ENCODE measurements at regions of chr10 and their contacts with region 1.

Region 1: DNA sequence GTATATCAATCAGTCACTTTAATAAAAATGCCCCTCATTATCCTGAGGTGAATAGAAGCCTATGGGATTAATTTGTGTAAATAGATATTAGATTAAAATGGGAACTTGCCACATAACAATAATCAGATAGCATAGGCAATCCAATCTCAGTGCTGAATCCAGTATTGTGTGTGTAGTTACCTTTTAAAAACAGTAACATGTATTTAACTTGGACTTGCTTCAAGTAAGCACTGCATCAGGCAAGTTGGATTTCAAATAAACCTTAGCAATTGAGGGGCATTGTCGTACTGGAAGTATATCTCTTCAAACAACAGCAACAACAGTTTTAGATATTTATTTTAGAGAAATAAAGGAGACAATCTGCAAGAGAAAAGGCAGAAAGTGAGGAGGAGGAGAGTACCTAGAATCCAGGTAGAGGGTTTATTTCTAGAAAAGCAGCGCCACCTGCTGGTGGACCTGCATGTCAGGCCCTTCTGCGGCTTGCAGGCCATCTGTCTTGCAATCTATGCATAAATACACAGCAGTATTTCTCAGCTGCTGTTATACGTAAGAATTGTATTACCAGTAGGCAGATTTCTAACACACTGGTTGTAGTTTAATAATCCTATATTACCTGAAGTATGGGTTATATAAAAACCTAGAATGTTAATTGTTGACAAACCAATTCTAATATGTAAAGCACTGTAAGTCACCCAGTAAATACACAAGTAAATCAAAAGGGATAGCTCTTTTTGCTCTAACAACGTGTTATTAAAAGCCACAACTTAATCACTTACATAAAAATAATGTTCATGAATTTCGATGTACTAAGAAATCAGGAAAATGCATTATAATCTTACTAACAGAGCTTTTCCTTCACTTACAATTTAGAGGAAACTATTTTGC is 652.8 kb downstream of the KCNMA1 start:
- DNase-seq: peak; percentile 71 to 86
- ATAC-seq: peak; percentile 80
- H3K4me3 ChIP-seq: no peak overlapping the region
- H3K27ac ChIP-seq: no peak overlapping the region
- H3K4me1 ChIP-seq: no peaks in the 10 kb centered on the region
- H3K27me3 ChIP-seq: no peaks in the 10 kb centered on the region

Region 2: GRCh38 chr10:76558586-76558985 is 426.2 kb before region 1 on chr10:
- intact Hi-C with region 1: loop called in 1 of 2 experiments (anchors 5 kb)
- DNase-seq: no peak
- ATAC-seq: no peak
- H3K4me3 ChIP-seq: no peak overlapping the region
- H3K27ac ChIP-seq: peak overlapping the region in 1 of 2 donors; percentile 68
- H3K4me1 ChIP-seq: peaks cover 0 to 7% of the 10 kb centered on the region in 2 donors
- H3K27me3 ChIP-seq: no peaks in the 10 kb centered on the region

Region 3: GRCh38 chr10:76675951-76676587 is 308.7 kb before region 1 on chr10:
- intact Hi-C with region 1: loop called in 1 of 2 experiments (anchors 10 kb)
- DNase-seq: peak; percentile 88 to 92
- ATAC-seq: peak; percentile 94
- H3K4me3 ChIP-seq: no peak overlapping the region
- H3K27ac ChIP-seq: peak overlapping the region; percentile 68 to 100
- H3K4me1 ChIP-seq: peaks cover 4 to 6% of the 10 kb centered on the region in 2 donors
- H3K27me3 ChIP-seq: no peaks in the 10 kb centered on the region

Region 4: DNA sequence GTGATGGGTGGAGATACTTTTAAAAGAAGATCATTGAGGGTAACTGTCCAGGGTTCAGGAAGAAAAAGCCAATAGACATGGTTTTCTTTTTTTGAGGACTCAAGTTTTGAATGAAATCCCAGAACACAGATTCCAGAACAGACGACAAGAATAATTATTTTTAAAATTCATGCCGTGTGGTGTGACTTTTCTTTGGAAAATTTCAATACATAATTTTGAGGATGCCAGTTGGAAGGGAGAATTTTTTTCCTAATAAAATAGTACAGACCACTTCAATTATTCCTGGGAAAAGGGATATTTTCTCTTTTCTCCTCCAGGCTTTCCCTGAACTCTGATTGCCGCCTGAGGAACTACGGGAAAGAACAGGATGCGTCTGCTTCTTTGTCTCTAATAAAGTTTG is 298.6 kb before region 1 on chr10:
- intact Hi-C with region 1: no loop called
- DNase-seq: no peak
- ATAC-seq: no peak
- H3K4me3 ChIP-seq: no peak overlapping the region
- H3K27ac ChIP-seq: peak overlapping the region; percentile 34 to 46
- H3K4me1 ChIP-seq: peaks cover 2 to 12% of the 10 kb centered on the region in 2 donors
- H3K27me3 ChIP-seq: no peaks in the 10 kb centered on the region

Region 5: GRCh38 chr10:76942628-76943416 is 42.0 kb before region 1 on chr10:
- intact Hi-C with region 1: no loop called
- DNase-seq: no peak
- ATAC-seq: no peak
- H3K4me3 ChIP-seq: no peak overlapping the region
- H3K27ac ChIP-seq: no peak overlapping the region
- H3K4me1 ChIP-seq: peaks cover 0 to 9% of the 10 kb centered on the region in 2 donors
- H3K27me3 ChIP-seq: no peaks in the 10 kb centered on the region